GM12878 (cell line): ENCODE measurements at regions of chr19 and their contacts with region 1.

Region 1: DNA sequence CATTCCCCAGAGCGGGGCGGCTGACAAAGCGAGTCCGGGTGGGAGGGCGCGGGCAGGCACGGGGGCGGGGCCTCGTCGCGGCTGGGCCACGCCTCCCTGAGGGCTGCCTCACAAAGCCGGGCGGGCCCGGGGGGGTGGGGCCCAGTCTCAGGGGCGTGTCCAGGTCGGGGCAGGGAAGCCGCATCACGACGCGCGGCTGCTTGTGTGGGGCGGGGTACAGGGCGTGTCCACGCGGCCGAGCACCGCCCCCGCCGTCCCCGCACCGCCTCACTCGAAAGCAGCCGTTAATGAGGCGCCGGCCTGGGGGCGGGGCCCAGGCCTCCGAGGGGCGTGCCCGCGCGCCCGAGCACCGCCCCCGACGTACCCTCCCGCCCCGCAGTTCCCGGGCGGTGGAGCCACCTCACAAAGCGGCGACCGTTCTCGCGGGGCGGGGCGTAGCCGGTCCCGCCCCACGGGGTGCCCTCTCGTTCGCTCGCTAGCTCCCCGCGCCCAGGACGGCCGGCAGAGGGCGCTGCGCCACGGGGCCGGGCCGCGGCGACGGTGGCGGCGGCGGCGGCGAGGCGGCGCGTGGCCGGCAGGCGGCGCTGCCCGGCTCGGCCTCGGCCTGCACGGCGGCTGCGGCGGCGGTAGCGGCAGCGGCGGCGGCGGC is at the start of gene CARM1:
- DNase-seq: peak; percentile 79
- ATAC-seq: peak; percentile 84
- H3K4me3 ChIP-seq: peak within 1 kb of the TSS; percentile 68
- H3K27ac ChIP-seq: peak within 1 kb of the TSS; percentile 90
- H3K4me1 ChIP-seq: peaks cover 33% of the 10 kb centered on the region
- H3K27me3 ChIP-seq: no peaks in the 10 kb centered on the region
- CTCF ChIP-seq: peak; percentile 55 to 90 (median 66)
- EP300 ChIP-seq: no peak
- POLR2A ChIP-seq: no peak
- RAD21 ChIP-seq: peak; percentile 72
- polyA plus RNA-seq, gene CARM1: 0.45 to 0.49 TPM

Region 2: GRCh38 chr19:10625003-10625776 is 245.9 kb before region 1 on chr19 and contains the start of gene SLC44A2:
- CTCF ChIA-PET with region 1: no interaction called
- POLR2A ChIA-PET with region 1: no interaction called
- RAD21 ChIA-PET with region 1: no interaction called
- SMC1A ChIA-PET with region 1: no interaction called
- in situ Hi-C with region 1: no loop called
- intact Hi-C with region 1: no loop called
- DNase-seq: no peak
- ATAC-seq: no peak
- H3K4me3 ChIP-seq: no peak within 1 kb of the TSS
- H3K27ac ChIP-seq: no peak within 1 kb of the TSS
- H3K4me1 ChIP-seq: no peaks in the 10 kb centered on the region
- H3K27me3 ChIP-seq: no peaks in the 10 kb centered on the region
- CTCF ChIP-seq: no peak
- EP300 ChIP-seq: no peak
- POLR2A ChIP-seq: no peak
- RAD21 ChIP-seq: no peak
- polyA plus RNA-seq, gene SLC44A2: 3.0 to 3.3 TPM

Region 3: DNA sequence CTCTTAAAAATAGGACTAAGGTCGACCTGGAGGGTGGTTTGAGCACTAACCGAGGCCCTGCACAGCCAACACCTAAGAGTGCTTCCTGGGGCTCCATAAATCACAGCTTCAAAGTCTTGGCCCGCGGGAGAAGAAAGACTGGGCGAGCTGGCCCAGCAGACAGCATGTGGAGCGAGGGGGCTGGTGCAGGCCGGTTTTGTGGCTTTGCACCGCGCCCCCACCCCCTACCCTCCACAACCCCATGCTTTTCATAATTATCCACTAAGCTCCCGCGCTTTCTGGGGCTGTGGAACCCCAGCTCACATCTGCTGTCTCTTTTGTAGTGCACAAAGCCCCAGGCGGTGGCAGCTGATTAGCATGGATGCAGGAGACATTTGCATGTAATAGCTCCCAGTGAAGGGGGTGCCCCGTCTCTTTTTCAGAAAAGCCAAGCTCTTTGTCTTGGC is 17.4 kb after region 1 on chr19:
- CTCF ChIA-PET with region 1: interaction called, 21 read pairs
- POLR2A ChIA-PET with region 1: interaction called, 11 read pairs
- RAD21 ChIA-PET with region 1: interaction called, 42 read pairs
- SMC1A ChIA-PET with region 1: interaction called, 28 read pairs
- in situ Hi-C with region 1: no loop called
- intact Hi-C with region 1: no loop called
- DNase-seq: no peak
- ATAC-seq: peak; percentile 79
- H3K4me3 ChIP-seq: no peak overlapping the region
- H3K27ac ChIP-seq: peak overlapping the region; percentile 53
- H3K4me1 ChIP-seq: peaks cover 20% of the 10 kb centered on the region
- H3K27me3 ChIP-seq: no peaks in the 10 kb centered on the region
- CTCF ChIP-seq: no peak
- EP300 ChIP-seq: no peak
- POLR2A ChIP-seq: no peak
- RAD21 ChIP-seq: no peak